Activated CD8-positive, alpha-beta T cell treated with anti-CD3 and anti-CD28 coated beads for 36 hours (primary cell): ENCODE measurements at regions of chr11 and their contacts with region 1.

Region 1: DNA sequence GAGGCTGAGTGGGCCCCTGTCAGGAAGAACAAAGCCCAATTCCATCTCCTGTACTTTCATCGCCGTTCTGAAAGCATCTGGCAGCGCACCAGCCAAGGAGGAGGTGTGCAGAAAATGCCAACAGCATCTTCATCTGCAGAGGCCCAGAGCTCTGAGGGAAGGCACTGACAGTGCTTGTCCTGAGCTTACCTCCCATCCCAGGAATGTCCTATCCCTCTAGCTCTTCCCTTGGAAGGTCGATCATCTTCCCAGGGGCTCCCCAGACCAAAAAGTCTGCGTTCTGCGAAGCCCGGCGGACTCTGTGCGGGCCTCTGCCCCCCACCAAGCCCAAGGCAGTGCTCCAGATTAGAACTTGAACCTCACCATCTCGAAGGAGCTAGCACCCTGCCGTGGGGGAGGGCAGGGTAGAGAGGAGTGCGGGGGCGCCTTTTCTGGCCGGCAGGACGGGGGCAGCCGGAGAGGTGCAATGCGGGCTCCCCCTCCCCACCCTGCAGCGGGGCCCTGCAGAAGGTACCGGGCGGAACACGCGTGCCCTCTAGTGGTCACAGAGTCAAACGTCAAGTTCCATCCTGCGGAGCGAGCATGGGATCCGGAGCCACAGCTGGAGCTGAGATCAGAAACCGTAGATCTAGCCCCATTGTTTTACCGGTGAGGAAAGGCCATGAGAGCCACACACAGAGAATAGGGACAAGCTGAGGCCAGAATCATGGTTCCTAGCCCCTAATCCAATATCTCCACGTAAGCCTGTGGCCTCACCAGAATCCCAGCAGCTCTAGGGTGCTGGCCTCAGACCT is 5.0 kb downstream of the SCN2B start:
- DNase-seq: peak; percentile 84
- ATAC-seq: peak; percentile 98
- H3K4me3 Mint-ChIP-seq: no peak overlapping the region
- H3K27ac Mint-ChIP-seq: no peak overlapping the region
- H3K4me1 Mint-ChIP-seq: peaks cover 2% of the 10 kb centered on the region
- H3K27me3 Mint-ChIP-seq: peaks cover 5% of the 10 kb centered on the region
- CTCF ChIP-seq: peak; percentile 94

Region 2: GRCh38 chr11:118117790-118118601 is 53.5 kb before region 1 on chr11:
- CTCF ChIA-PET with region 1: interaction called, 16 read pairs
- POLR2A ChIA-PET with region 1: interaction called, 3 read pairs
- intact Hi-C with region 1: no loop called
- DNase-seq: peak; percentile 77
- ATAC-seq: peak; percentile 99
- H3K4me3 Mint-ChIP-seq: peak overlapping the region; percentile 58
- H3K27ac Mint-ChIP-seq: peak overlapping the region; percentile 77
- H3K4me1 Mint-ChIP-seq: peaks cover 34% of the 10 kb centered on the region
- H3K27me3 Mint-ChIP-seq: no peaks in the 10 kb centered on the region
- CTCF ChIP-seq: no peak

Region 3: DNA sequence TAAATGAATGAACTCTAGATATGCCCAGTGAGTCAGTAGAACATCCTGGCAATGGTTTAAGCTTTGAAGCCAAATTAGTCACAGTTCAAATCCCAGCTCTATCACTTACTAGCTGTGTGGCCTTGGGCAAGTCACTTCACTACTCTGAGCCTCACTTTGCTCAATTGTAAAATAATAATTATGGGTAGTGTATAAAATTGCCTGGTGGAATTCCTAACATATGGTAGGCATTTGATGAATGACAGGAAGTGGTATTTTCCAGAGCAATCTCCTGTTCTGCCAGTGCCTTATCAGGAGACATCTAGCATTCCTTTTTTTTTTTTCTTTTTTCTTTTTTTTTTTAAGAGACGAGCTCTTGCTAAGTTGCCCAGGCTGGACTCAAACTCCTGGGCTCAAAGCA is 31.9 kb before region 1 on chr11:
- CTCF ChIA-PET with region 1: interaction called, 116 read pairs
- POLR2A ChIA-PET with region 1: no interaction called
- intact Hi-C with region 1: no loop called
- DNase-seq: no peak
- ATAC-seq: peak; percentile 55
- H3K4me3 Mint-ChIP-seq: no peak overlapping the region
- H3K27ac Mint-ChIP-seq: no peak overlapping the region
- H3K4me1 Mint-ChIP-seq: no peaks in the 10 kb centered on the region
- H3K27me3 Mint-ChIP-seq: peaks cover 39% of the 10 kb centered on the region
- CTCF ChIP-seq: no peak

Region 4: DNA sequence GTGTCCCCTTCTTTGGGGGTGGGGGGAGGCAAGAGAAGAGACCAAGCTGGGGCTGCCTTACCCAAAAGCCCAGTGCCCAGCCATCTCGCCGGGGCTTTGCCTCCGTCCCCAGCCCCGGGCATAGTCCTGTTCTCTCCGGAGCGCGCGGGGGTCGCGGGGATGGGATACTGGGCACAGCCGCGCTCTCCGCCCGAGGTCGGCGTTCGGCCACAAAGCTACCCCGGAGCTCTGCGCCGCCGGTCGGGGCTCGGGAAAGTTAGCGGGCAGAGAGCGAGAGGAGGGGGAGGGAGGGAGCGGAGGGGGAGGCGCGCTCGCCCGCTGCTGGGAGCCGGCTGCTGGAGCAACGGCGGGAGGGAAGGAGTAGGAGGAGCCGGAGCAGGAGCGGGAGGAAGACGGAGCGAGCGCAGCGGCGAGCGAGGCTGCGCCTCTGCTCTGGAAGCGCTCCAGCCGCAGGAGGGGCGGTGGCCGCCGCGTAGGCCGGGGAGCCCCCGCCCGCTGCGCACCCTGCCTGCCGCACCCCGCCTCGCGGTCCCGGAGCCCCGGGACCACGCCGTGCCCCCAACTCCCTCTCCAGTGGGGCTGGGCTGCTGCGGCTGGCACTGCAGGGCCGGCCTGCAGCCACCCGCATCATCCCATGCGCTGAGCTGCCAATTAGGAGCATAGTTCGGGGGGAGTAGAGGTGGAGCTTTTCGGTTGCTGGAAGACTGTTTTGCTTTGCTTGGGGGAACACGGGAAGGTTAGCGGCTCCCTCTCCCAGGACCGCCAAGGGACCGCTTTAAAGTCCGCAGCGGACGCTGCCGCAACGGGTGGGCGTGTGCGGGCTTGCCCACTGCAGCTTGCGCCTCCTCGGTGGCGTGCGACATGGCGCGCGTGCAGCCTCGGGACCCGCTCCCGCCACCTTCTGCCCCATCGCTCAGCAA is 18.7 kb before region 1 on chr11 and contains the start of gene SCN4B:
- CTCF ChIA-PET with region 1: interaction called, 116 read pairs
- POLR2A ChIA-PET with region 1: interaction called, 5 read pairs
- intact Hi-C with region 1: no loop called
- DNase-seq: no peak
- ATAC-seq: peak; percentile 34
- H3K4me3 Mint-ChIP-seq: peak within 1 kb of the TSS; percentile 57
- H3K27ac Mint-ChIP-seq: no peak within 1 kb of the TSS
- H3K4me1 Mint-ChIP-seq: peaks cover 4% of the 10 kb centered on the region
- H3K27me3 Mint-ChIP-seq: peaks cover 55% of the 10 kb centered on the region
- CTCF ChIP-seq: no peak
- total RNA-seq, gene SCN4B: 0.72 to 1.1 TPM

Region 5: DNA sequence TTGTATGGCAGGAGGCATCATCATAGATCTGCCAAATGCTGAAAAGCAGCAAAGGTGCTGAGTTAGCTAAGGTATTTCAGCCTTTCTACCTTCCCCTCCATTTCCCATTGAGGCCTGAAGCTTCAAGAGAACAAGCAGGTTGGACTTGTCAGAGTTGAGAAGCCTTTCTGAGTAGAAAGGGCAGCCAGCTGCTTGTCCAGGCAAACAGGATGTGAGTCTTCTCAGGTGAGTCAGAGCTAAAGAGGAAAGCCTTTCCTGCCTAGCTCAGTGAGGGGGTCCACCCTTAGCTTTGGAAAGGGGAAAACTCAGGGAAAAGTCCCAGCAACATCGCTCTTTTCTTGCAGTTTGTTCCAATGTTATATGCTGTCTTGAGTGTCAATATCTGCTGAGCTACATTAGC is 105.8 kb after region 1 on chr11:
- CTCF ChIA-PET with region 1: interaction called, 13 read pairs
- POLR2A ChIA-PET with region 1: no interaction called
- intact Hi-C with region 1: no loop called
- DNase-seq: peak; percentile 49
- ATAC-seq: peak; percentile 74
- H3K4me3 Mint-ChIP-seq: no peak overlapping the region
- H3K27ac Mint-ChIP-seq: peak overlapping the region; percentile 14
- H3K4me1 Mint-ChIP-seq: peaks cover 52% of the 10 kb centered on the region
- H3K27me3 Mint-ChIP-seq: no peaks in the 10 kb centered on the region
- CTCF ChIP-seq: no peak

Region 6: DNA sequence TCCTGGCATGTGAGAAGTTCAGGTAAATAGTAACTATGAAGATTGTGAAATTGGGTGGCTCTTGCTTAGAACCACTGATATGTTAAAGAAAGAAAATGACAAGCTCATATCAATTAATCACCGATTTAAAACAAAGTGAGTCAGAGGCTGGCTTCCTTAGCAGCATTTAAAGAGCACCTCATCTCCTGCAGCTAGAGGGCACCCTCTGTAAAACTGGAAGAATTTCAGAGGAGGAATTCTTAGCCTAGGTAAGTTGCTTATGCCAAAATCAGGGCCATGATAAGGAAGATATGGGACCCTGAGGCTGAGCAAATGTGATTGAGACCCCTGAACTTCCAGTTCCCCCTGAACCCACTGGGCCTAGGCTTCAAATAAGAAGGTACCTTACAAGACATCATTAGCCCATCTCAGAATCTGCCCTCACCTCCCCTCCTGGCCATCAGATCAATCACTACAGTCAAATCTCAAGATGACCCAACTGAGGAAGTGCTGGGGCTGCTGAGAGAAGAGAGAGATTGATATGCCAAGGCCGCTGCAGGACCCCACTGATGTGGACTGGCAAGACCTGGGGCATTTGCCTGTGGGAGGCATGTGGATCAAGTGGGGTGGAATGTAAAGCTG is 124.5 kb after region 1 on chr11:
- CTCF ChIA-PET with region 1: interaction called, 18 read pairs
- POLR2A ChIA-PET with region 1: no interaction called
- intact Hi-C with region 1: no loop called
- DNase-seq: peak; percentile 70
- ATAC-seq: peak; percentile 77
- H3K4me3 Mint-ChIP-seq: no peak overlapping the region
- H3K27ac Mint-ChIP-seq: peak overlapping the region; percentile 36
- H3K4me1 Mint-ChIP-seq: peaks cover 19% of the 10 kb centered on the region
- H3K27me3 Mint-ChIP-seq: no peaks in the 10 kb centered on the region
- CTCF ChIP-seq: peak; percentile 78